Spleen (tissue), 13 donors: ENCODE measurements at regions of chr15 and their contacts with region 1.

Region 1: GRCh38 chr15:56491110-56491722 is 26.3 kb upstream of the MNS1 start:
- DNase-seq: no peak
- H3K4me3 ChIP-seq: no peak overlapping the region
- H3K27ac ChIP-seq: no peak overlapping the region
- H3K4me1 ChIP-seq: no peaks in the 10 kb centered on the region
- H3K27me3 ChIP-seq: no peaks in the 10 kb centered on the region
- CTCF ChIP-seq: peak; percentile 17 to 80 (median 73)
- POLR2A ChIP-seq: no peak

Region 2: GRCh38 chr15:57306161-57306943 is 815.1 kb after region 1 on chr15:
- intact Hi-C with region 1: loop called (anchors 10 kb)
- DNase-seq: peak; percentile 96
- H3K4me3 ChIP-seq: peak overlapping the region; percentile 33 to 70 (median 44)
- H3K27ac ChIP-seq: peak overlapping the region in 4 of 8 donors; percentile 9 to 67 (median 50)
- H3K4me1 ChIP-seq: peaks cover 7 to 50% (median 17%) of the 10 kb centered on the region in 6 donors
- H3K27me3 ChIP-seq: peaks cover 0 to 6% (median 0%) of the 10 kb centered on the region in 7 donors
- CTCF ChIP-seq: peak; percentile 50 to 93 (median 84)
- POLR2A ChIP-seq: no peak

Region 3: DNA sequence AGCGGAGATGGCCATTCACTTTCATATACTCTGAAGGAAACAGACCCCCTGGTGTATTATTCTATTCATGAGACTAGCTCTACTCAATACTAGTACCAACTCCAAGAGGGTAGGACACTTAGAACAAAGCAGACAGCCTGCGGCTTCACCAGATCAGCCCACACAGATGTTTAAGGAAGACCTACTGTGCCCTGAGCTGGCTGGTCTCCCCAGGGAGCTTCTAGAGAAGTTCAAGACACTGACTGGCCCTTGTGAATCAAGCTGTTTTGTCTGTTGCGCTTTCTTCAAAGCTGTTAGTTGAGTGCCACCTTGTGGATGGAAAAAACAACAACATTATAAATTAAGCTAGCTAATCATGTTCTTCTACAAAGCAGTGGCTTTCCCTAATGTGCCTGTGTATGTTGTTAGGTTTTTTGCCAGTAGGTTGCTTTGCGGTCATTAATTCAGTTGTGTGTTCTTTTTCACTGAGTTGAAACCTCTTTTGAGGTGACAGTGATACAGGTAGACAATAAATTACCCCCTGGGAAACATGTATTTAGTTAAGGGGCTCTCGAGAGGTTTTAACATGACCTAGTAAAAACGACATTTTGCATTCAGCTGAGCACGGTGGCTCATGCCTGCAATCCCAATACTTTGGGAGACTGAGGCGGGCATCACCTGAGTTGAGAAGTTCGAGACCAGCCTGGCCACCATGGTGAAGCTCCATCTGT is 1036.3 kb after region 1 on chr15:
- intact Hi-C with region 1: loop called (anchors 10 kb)
- DNase-seq: no peak
- H3K4me3 ChIP-seq: no peak overlapping the region
- H3K27ac ChIP-seq: no peak overlapping the region
- H3K4me1 ChIP-seq: peaks cover 0 to 8% (median 0%) of the 10 kb centered on the region in 6 donors
- H3K27me3 ChIP-seq: peaks cover 0 to 43% (median 4%) of the 10 kb centered on the region in 7 donors
- CTCF ChIP-seq: peak; percentile 17 to 65 (median 41)
- POLR2A ChIP-seq: no peak